Common myeloid progenitor, CD34-positive (primary cell): ENCODE measurements at regions of chr6 and their contacts with region 1.

Region 1: GRCh38 chr6:131615275-131615674 is 12.8 kb downstream of the MED23 start:
- DNase-seq: no peak
- H3K4me3 ChIP-seq: no peak overlapping the region
- H3K27ac ChIP-seq: no peak overlapping the region
- H3K4me1 ChIP-seq: no peaks in the 10 kb centered on the region
- H3K27me3 ChIP-seq: no peaks in the 10 kb centered on the region

Region 2: GRCh38 chr6:131627724-131628682 is 12.7 kb after region 1 on chr6 and contains the start of gene MED23:
- CTCF ChIA-PET with region 1: interaction called, 30 read pairs
- POLR2A ChIA-PET with region 1: interaction called, 7 read pairs
- DNase-seq: peak; percentile 96 to 97 (median 96)
- H3K4me3 ChIP-seq: peak within 1 kb of the TSS; percentile 82 to 97 (median 96)
- H3K27ac ChIP-seq: peak within 1 kb of the TSS; percentile 78 to 89
- H3K4me1 ChIP-seq: peaks cover 4 to 14% (median 12%) of the 10 kb centered on the region in 4 experiments
- H3K27me3 ChIP-seq: no peaks in the 10 kb centered on the region